H1 (cell line): ENCODE measurements at regions of chr1 and their contacts with region 1.

Region 1: GRCh38 chr1:22704440-22705067 is 6.1 kb upstream of the EPHB2 start:
- DNase-seq: peak; percentile 29 to 88
- H3K4me3 ChIP-seq: no peak overlapping the region
- H3K27ac ChIP-seq: no peak overlapping the region
- H3K4me1 ChIP-seq: peaks cover 0 to 4% (median 0%) of the 10 kb centered on the region in 4 experiments; a peak in 1 of 7 replicates
- H3K27me3 ChIP-seq: peaks cover 0 to 3% (median 1%) of the 10 kb centered on the region in 4 experiments; a peak in 3 of 7 replicates
- CTCF ChIP-seq: peak; percentile 71 to 92 (median 91)
- EP300 ChIP-seq: no peak
- POLR2A ChIP-seq: no peak
- RAD21 ChIP-seq: peak; percentile 84 to 87

Region 2: DNA sequence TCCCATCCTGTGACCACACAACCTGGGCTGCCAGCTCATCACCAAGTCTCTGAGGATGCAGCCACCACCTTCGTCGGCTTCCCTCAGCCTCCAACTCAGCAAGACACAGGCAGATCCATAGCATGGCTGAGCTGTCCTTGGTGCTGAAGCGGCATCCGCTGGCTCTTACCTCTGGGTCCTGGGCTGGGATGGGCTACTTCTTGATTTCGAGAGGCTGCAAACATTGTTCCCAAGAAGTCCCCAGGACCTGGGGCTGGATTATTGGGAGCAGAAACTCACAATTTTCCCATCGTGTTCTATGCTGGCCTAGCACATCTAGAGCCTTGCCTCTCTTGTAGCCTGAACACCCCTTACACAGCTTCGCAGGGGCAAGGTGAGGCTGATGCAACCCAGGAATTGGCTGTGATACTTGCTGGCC is 93.0 kb before region 1 on chr1:
- CTCF ChIA-PET with region 1: no interaction called
- POLR2A ChIA-PET with region 1: no interaction called
- DNase-seq: peak; percentile 54 to 92
- H3K4me3 ChIP-seq: no peak overlapping the region
- H3K27ac ChIP-seq: no peak overlapping the region
- H3K4me1 ChIP-seq: peaks cover 0 to 6% (median 3%) of the 10 kb centered on the region in 4 experiments; a peak in 6 of 7 replicates
- H3K27me3 ChIP-seq: no peaks in the 10 kb centered on the region; a peak in 2 of 7 replicates
- CTCF ChIP-seq: no peak
- EP300 ChIP-seq: no peak
- POLR2A ChIP-seq: no peak
- RAD21 ChIP-seq: no peak; a peak in 1 of 4 replicates

Region 3: GRCh38 chr1:22665752-22666151 is 38.8 kb before region 1 on chr1:
- CTCF ChIA-PET with region 1: interaction called, 13 read pairs
- POLR2A ChIA-PET with region 1: no interaction called
- DNase-seq: peak in 1 of 2 experiments; percentile 79
- H3K4me3 ChIP-seq: no peak overlapping the region
- H3K27ac ChIP-seq: no peak overlapping the region
- H3K4me1 ChIP-seq: peaks cover 0 to 1% (median 0%) of the 10 kb centered on the region in 4 experiments; a peak in 1 of 7 replicates
- H3K27me3 ChIP-seq: no peaks in the 10 kb centered on the region
- CTCF ChIP-seq: peak; percentile 81 to 91 (median 88)
- EP300 ChIP-seq: no peak
- POLR2A ChIP-seq: no peak
- RAD21 ChIP-seq: peak; percentile 94 to 95

Region 4: DNA sequence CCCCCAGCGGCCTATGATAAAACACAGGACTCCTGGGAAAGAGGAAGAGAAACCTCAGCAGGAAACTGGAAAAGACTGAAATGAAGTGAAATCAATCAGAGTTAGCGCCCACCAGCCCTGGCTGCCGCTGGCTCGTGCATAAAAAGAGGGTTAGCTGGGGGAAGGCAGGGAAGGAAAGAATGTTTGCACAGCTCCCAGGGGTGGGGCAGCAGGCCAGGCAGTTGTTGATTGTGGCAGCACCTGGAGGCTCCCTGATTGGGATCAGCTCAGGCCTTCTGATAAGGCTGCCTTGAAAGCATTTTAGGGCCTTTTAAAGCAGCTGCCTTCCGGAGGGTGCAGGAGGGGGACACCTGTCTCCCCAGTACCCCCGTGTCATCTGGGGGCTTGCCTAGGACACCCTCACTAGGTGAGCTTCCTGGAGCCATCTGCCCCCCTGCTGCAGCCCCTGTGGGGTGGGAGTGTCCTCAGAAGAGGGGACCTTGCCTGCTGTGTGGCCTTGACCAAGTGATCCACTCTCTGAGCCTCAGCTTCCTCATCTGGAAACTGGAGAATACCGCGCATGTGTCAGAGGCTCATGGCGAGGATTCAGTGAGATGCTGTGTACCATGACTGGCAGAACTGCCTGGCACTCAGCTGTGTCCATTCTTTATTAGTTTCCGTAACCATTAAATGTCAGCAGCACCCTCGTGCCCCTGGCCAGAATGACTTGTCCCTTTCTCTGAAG is 12.6 kb after region 1 on chr1:
- CTCF ChIA-PET with region 1: interaction called, 86 read pairs
- POLR2A ChIA-PET with region 1: interaction called, 4 read pairs
- DNase-seq: no peak
- H3K4me3 ChIP-seq: no peak overlapping the region
- H3K27ac ChIP-seq: no peak overlapping the region
- H3K4me1 ChIP-seq: peaks cover 0 to 11% (median 6%) of the 10 kb centered on the region in 4 experiments; a peak in 6 of 7 replicates
- H3K27me3 ChIP-seq: peaks cover 0 to 8% (median 2%) of the 10 kb centered on the region in 4 experiments; a peak in 5 of 7 replicates
- CTCF ChIP-seq: no peak
- EP300 ChIP-seq: no peak
- POLR2A ChIP-seq: no peak
- RAD21 ChIP-seq: no peak

Region 5: DNA sequence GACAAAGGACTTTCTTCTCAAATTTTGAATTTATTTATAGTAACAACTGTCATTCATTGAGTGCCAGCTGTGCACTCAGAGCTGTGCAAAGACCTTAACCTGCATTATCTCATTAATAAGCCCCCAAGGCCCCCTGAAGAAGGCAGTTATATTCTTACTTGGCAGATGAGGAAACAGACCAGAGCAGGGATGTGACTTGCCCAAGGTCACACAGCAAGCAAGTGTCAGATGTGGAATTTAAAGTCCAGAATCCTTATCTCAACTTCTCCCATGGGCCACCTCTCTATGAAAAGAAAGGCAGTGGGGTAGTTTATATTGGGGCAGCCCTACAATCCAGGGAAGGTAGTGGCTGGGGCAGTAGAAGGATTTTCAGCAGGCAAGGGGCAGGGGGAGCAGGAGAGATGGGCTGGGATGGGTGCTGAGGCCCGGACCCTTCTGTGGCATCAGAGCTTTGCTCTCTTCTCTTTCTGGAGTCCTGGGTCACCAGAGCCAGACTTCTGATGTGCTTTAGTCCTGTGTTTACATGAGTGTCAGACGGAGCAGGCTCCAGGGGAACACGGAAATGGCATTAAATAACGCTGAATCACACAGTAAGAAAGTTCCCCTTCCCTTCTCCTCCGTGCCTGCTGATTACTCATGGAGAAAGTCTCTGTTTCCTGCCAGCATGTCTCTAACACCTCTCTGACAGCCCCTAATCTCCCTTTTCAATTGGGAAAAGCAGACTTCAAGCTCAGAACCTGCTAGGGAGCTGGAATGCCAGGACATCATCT is 45.5 kb after region 1 on chr1:
- CTCF ChIA-PET with region 1: interaction called, 10 read pairs
- POLR2A ChIA-PET with region 1: no interaction called
- DNase-seq: no peak
- H3K4me3 ChIP-seq: no peak overlapping the region
- H3K27ac ChIP-seq: no peak overlapping the region
- H3K4me1 ChIP-seq: peaks cover 0 to 5% (median 1%) of the 10 kb centered on the region in 4 experiments; a peak in 2 of 7 replicates
- H3K27me3 ChIP-seq: no peaks in the 10 kb centered on the region
- CTCF ChIP-seq: no peak
- EP300 ChIP-seq: no peak
- POLR2A ChIP-seq: no peak
- RAD21 ChIP-seq: no peak

Region 6: DNA sequence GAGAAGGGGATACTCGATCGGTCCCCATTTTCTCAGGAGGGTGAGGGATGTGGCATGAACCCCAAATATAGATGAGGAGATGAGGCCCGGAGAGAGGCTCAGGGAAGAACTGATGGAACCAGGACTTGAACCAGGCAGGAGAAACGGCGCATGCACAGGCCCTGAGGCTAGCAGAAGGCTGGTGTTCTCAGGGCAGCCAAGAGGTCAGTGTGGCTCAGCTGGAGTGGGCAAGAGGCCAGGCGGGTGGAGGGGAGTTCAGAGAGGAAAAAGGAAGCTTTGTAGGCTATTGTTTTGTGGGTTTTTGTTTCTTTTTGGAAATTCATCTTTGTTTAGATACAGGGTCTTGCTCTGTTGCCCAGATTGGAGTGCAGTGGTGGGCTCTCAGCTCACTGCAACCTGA is 146.1 kb after region 1 on chr1:
- CTCF ChIA-PET with region 1: interaction called, 18 read pairs
- POLR2A ChIA-PET with region 1: no interaction called
- DNase-seq: no peak
- H3K4me3 ChIP-seq: no peak overlapping the region
- H3K27ac ChIP-seq: no peak overlapping the region
- H3K4me1 ChIP-seq: peaks cover 6 to 15% (median 10%) of the 10 kb centered on the region in 4 experiments
- H3K27me3 ChIP-seq: no peaks in the 10 kb centered on the region
- CTCF ChIP-seq: no peak
- EP300 ChIP-seq: no peak
- POLR2A ChIP-seq: no peak
- RAD21 ChIP-seq: no peak

Region 7: DNA sequence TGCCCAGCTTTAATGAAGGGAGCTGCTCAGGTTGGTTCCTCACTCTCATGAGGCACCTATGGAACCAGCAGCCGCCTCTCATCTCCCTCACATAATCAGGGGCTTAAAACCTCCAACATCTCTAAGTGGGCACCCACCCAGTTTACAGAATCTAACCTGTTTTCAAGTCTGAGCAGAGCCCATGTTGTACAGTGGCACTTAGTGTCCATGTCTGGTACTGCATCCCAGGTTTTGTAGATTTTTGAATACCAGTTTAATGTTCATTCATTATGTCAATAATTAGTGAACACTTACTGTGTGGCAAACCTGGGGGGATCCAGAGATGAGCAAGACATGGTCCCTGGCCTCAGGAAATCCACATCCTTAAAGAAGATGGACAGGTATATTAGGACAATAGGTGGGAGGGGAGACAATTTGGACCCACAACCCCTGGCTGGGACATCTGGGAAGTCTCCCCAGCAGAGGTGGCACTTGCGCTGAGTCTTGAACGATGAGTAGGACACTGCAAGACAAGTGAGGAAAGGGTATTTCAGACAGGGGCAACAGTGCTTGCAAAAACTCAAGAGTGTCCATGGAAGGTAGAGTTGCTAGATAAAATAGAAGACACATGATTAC is 184.8 kb after region 1 on chr1:
- CTCF ChIA-PET with region 1: interaction called, 12 read pairs
- POLR2A ChIA-PET with region 1: no interaction called
- DNase-seq: no peak
- H3K4me3 ChIP-seq: no peak overlapping the region
- H3K27ac ChIP-seq: no peak overlapping the region
- H3K4me1 ChIP-seq: no peaks in the 10 kb centered on the region
- H3K27me3 ChIP-seq: no peaks in the 10 kb centered on the region
- CTCF ChIP-seq: peak in 2 of 3 experiments; percentile 32 to 62; a peak in 3 of 4 replicates
- EP300 ChIP-seq: no peak
- POLR2A ChIP-seq: no peak
- RAD21 ChIP-seq: peak; percentile 61 to 64

Region 8: DNA sequence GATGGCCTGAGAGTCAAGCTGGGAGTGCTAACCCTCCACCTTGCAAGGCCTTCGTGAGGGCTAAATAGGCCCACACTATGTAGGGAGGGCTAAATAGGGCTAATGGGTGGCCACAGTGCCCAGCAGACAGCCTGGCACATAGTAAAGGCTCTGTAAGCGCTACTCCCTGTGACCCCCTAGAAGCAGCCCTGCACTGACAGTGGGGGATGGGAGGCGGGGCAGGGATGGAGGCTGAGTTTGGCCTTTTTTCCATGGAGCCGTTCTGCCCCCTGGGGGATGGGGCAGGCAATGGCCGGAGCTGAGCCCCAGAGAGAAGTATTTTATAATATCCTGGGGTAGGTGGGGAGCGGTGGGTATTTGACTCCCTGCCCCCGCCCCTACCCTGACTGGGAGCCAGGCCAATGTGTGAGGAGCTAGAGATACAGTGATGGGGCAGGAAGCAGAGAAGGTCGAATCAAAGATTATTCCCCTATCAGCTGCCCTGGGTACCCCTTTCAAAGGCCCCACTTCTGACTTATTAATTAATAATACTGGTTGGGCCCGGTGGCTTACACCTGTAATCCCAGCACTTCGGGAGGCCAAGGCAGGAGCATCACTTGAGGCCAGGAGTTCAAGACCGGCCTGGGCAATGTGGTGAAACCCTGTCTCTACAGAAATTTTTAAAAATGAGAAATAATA is 225.8 kb after region 1 on chr1:
- CTCF ChIA-PET with region 1: interaction called, 27 read pairs
- POLR2A ChIA-PET with region 1: no interaction called
- DNase-seq: peak; percentile 44 to 95
- H3K4me3 ChIP-seq: no peak overlapping the region
- H3K27ac ChIP-seq: no peak overlapping the region
- H3K4me1 ChIP-seq: no peaks in the 10 kb centered on the region
- H3K27me3 ChIP-seq: no peaks in the 10 kb centered on the region; a peak in 1 of 7 replicates
- CTCF ChIP-seq: peak; percentile 81 to 93 (median 85)
- EP300 ChIP-seq: 0 out of 3 replicates have a peak, but pooled peaks of 1 of the 2 experiments have one; percentile 46
- POLR2A ChIP-seq: no peak
- RAD21 ChIP-seq: peak; percentile 94 to 98